Left lung (tissue), 14 donors: ENCODE measurements at regions of chr7 and their contacts with region 1.

Region 1: DNA sequence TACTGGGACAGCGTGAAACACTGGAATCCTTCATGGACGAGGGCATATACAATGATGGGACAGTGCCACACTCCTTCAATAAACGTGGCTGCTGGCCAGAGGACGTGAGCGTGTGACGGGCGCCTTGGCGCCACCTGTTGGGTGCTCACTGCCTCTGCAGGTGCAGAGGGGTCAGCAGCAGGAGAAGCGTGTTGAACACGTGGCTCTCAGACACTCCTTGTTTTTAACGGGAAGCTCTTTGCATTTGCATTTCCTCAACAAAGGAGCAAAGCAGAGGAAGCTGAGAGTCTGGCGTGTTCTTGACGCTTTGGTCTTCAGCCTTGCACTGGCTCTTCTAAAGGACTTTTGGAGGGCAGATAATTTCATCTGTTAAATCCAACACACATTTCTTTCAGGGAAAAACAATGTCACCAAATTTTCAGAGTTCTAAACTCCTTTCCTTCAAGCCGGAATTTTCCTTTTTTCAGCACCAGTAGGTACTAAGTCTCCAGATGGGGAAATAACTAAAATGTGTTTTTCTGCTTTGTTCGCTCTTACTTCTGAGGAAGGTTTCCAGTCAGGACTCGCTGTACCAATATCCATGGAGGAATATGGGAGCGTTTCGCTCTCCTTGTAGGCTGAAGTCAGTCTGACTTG is 2.9 kb upstream of the GET4 start:
- DNase-seq: peak; percentile 58 to 93 (median 86)
- ATAC-seq: peak; percentile 70
- H3K4me3 ChIP-seq: no peak overlapping the region
- H3K27ac ChIP-seq: peak overlapping the region; percentile 62 to 65
- H3K4me1 ChIP-seq: peaks cover 12 to 39% of the 10 kb centered on the region in 2 donors
- H3K27me3 ChIP-seq: no peaks in the 10 kb centered on the region
- CTCF ChIP-seq: peak; percentile 82 to 95

Region 2: DNA sequence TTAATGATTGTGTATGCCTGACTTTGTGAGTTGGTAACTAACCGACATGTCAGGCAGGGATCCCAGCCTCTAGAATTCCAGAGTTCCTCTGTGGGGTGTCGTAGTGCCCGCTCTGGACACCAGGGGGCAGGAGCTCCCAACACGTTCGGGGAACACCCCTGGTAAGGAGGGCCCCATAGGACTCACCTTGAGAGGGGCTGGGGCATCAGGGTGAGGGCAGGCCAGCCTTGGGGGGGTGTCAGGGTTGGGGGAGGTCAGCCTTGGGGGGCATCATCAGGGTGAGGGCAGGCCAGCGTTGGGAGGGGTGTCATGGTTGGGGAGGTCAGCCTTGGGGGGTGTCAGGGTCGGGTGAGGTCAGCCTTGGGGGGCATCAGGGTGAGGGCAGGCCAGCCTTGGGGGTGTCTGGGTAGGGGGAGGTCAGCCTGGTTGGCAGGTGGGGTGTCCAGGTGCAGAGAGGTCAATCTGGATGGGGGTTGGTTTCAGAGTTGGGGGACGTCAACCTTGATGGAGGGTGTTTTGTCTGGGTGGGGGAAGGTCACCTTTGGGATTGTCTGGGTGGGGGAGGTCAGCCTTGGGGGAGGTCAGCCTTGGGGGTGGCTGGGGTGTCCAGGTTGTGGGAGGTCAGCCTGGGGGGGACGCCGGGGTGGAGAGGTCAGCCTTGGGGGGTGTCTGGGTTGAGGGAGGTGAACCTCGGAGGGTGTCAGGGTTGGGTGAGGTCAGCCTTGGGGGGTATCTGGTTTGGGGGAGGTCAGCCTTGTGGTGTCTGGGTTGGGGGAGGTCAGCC is 86.8 kb before region 1 on chr7:
- intact Hi-C with region 1: loop called in 1 of 2 experiments (anchors 5 kb)
- DNase-seq: peak in 2 of 4 donors; percentile 64 to 83
- ATAC-seq: peak; percentile 96
- H3K4me3 ChIP-seq: no peak overlapping the region
- H3K27ac ChIP-seq: no peak overlapping the region
- H3K4me1 ChIP-seq: no peaks in the 10 kb centered on the region
- H3K27me3 ChIP-seq: no peaks in the 10 kb centered on the region
- CTCF ChIP-seq: peak; percentile 67 to 72